Activated CD4-positive, alpha-beta memory T cell treated with anti-CD3 and anti-CD28 coated beads for 36 hours (primary cell): ENCODE measurements at regions of chr18 and their contacts with region 1.

Region 1: DNA sequence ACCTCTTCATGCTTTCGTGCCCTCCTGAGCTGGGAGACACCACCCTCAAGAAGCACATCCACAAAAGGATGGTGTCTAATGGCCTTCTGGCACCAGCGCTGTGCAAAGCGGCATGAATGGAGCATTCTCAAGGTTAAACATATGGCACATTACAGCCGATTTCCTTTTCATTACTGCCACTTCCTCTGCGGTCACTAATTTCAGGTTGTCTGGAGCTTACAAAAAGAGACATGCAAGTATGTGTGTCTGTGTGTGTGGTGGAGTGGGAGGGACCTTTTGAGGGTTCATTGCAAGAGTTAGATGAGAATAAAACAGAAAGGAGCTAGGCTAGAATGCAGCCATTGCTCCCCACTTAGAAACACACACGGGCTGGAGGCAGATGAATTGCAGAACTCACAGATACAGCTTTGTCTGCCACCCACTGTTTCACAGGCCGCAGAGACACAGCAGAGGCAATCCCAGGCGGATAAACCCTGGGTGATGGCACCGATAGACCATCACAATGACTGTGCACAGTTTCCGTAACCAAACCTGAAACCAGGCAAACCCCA is 76.0 kb downstream of the TGIF1 start:
- DNase-seq: peak; percentile 71
- H3K4me3 Mint-ChIP-seq: peak overlapping the region; percentile 11
- H3K27ac Mint-ChIP-seq: peak overlapping the region; percentile 8
- H3K4me1 Mint-ChIP-seq: peaks cover 17% of the 10 kb centered on the region
- H3K27me3 Mint-ChIP-seq: no peaks in the 10 kb centered on the region

Region 2: GRCh38 chr18:2994603-2995432 is 531.1 kb before region 1 on chr18:
- CTCF ChIA-PET with region 1: no interaction called
- POLR2A ChIA-PET with region 1: no interaction called
- intact Hi-C with region 1: no loop called
- DNase-seq: peak; percentile 86
- H3K4me3 Mint-ChIP-seq: peak overlapping the region; percentile 26
- H3K27ac Mint-ChIP-seq: peak overlapping the region; percentile 91
- H3K4me1 Mint-ChIP-seq: peaks cover 83% of the 10 kb centered on the region
- H3K27me3 Mint-ChIP-seq: no peaks in the 10 kb centered on the region

Region 3: DNA sequence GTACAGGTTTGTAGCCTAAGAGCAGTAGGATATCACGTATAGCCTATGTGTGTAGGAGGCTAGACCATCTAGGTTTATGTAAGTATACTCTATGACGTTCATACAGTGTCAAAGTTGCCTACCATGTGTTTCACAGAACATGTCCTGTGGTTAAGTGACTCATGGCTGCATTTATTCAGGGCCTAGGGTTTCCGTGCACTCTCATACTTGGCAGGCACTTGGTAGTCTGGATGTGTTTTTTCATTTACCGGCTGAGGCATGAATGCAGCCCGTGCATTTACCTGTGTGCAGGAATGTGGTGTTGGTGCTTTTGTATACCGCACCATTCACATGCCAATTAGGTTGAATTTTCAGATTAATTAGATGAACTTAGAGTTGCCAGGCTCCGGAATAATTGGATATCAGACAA is 220.6 kb before region 1 on chr18:
- CTCF ChIA-PET with region 1: no interaction called
- POLR2A ChIA-PET with region 1: no interaction called
- intact Hi-C with region 1: no loop called
- DNase-seq: peak; percentile 77
- H3K4me3 Mint-ChIP-seq: no peak overlapping the region
- H3K27ac Mint-ChIP-seq: peak overlapping the region; percentile 80
- H3K4me1 Mint-ChIP-seq: peaks cover 21% of the 10 kb centered on the region
- H3K27me3 Mint-ChIP-seq: peaks cover 15% of the 10 kb centered on the region

Region 4: DNA sequence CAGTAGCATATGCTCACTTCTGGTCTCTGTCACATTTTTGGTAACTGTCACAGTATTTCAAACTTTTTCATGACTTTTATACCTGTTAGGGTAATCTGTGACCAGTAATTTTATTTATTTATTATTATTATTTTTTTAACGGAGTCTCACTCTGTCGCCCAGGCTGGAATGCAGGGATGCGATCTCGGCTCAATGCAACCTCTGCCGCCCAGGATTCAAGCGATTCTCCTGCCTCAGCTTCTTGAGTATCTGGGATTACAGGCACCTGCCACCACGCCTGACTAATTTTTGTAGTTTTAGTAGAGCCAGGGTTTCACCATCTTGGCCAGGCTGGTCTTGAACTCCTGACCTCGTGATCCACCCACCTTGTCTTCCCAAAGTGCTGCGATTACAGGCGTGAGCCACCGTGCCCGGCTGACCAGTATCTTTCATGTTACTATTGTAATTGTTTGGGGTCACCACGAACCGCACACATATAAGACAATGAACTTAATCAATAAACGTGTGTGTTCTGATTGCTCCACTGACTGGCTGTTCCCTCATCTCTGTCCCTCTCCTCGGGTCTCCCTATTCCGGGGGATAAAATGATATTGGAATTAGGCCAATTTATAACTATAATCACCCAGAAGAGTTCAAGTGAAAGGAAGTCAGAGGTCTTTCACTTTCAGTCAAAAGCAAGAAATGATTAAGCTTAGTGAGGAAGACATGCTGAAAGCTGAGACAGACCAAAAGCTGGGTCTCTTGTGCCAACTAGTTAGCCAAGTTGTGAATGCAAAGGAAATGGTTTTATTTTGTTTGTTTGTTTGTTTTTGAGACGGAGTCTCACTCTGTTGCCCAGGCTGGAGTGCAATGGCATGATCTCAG is 53.0 kb before region 1 on chr18:
- CTCF ChIA-PET with region 1: no interaction called
- POLR2A ChIA-PET with region 1: interaction called, 3 read pairs
- intact Hi-C with region 1: loop called (anchors 5 kb)
- DNase-seq: peak; percentile 41
- H3K4me3 Mint-ChIP-seq: peak overlapping the region; percentile 23
- H3K27ac Mint-ChIP-seq: peak overlapping the region; percentile 8
- H3K4me1 Mint-ChIP-seq: peaks cover 17% of the 10 kb centered on the region
- H3K27me3 Mint-ChIP-seq: peaks cover 5% of the 10 kb centered on the region

Region 5: GRCh38 chr18:3481696-3482210 is 44.2 kb before region 1 on chr18:
- CTCF ChIA-PET with region 1: no interaction called
- POLR2A ChIA-PET with region 1: no interaction called
- intact Hi-C with region 1: loop called (anchors 5 kb)
- DNase-seq: peak; percentile 40
- H3K4me3 Mint-ChIP-seq: no peak overlapping the region
- H3K27ac Mint-ChIP-seq: no peak overlapping the region
- H3K4me1 Mint-ChIP-seq: peaks cover 9% of the 10 kb centered on the region
- H3K27me3 Mint-ChIP-seq: peaks cover 1% of the 10 kb centered on the region

Region 6: GRCh38 chr18:3508576-3509549 is 17.1 kb before region 1 on chr18:
- CTCF ChIA-PET with region 1: no interaction called
- POLR2A ChIA-PET with region 1: no interaction called
- intact Hi-C with region 1: no loop called
- DNase-seq: no peak
- H3K4me3 Mint-ChIP-seq: no peak overlapping the region
- H3K27ac Mint-ChIP-seq: no peak overlapping the region
- H3K4me1 Mint-ChIP-seq: peaks cover 19% of the 10 kb centered on the region
- H3K27me3 Mint-ChIP-seq: no peaks in the 10 kb centered on the region

Region 7: GRCh38 chr18:3541549-3542386 is 15.8 kb after region 1 on chr18:
- CTCF ChIA-PET with region 1: interaction called, 5 read pairs
- POLR2A ChIA-PET with region 1: interaction called, 8 read pairs
- intact Hi-C with region 1: loop called (anchors 2 kb)
- DNase-seq: peak; percentile 68
- H3K4me3 Mint-ChIP-seq: peak overlapping the region; percentile 8
- H3K27ac Mint-ChIP-seq: peak overlapping the region; percentile 59
- H3K4me1 Mint-ChIP-seq: peaks cover 35% of the 10 kb centered on the region
- H3K27me3 Mint-ChIP-seq: no peaks in the 10 kb centered on the region

Region 8: GRCh38 chr18:3612315-3612714 is 86.4 kb after region 1 on chr18:
- CTCF ChIA-PET with region 1: no interaction called
- POLR2A ChIA-PET with region 1: no interaction called
- intact Hi-C with region 1: no loop called
- DNase-seq: peak; percentile 38
- H3K4me3 Mint-ChIP-seq: no peak overlapping the region
- H3K27ac Mint-ChIP-seq: no peak overlapping the region
- H3K4me1 Mint-ChIP-seq: peaks cover 12% of the 10 kb centered on the region
- H3K27me3 Mint-ChIP-seq: no peaks in the 10 kb centered on the region